K562 (cell line): ENCODE measurements at regions of chr9 and their contacts with region 1.

Region 1: GRCh38 chr9:114718801-114719221 is 36.8 kb upstream of the TEX48 start:
- DNase-seq: peak in 3 of 4 experiments; percentile 17 to 36 (median 22)
- ATAC-seq: peak; percentile 74
- H3K4me3 ChIP-seq: no peak overlapping the region
- H3K27ac ChIP-seq: no peak overlapping the region
- H3K4me1 ChIP-seq: peaks cover 0 to 4% of the 10 kb centered on the region in 2 experiments; a peak in 1 of 5 replicates
- H3K27me3 ChIP-seq: peaks cover 0 to 11% of the 10 kb centered on the region in 2 experiments; a peak in 2 of 5 replicates
- CTCF ChIP-seq: 0 out of 6 replicates have a peak, but pooled peaks of 1 of the 3 experiments have one; percentile 5
- EP300 ChIP-seq: no peak
- POLR2A ChIP-seq: no peak
- RAD21 ChIP-seq: no peak

Region 2: GRCh38 chr9:114671605-114672004 is 47.2 kb before region 1 on chr9:
- CTCF ChIA-PET with region 1: no interaction called
- POLR2A ChIA-PET with region 1: no interaction called
- in situ Hi-C with region 1: no loop called
- intact Hi-C with region 1: no loop called
- DNase-seq: no peak
- ATAC-seq: no peak
- H3K4me3 ChIP-seq: no peak overlapping the region
- H3K27ac ChIP-seq: no peak overlapping the region
- H3K4me1 ChIP-seq: no peaks in the 10 kb centered on the region
- H3K27me3 ChIP-seq: peaks cover 6 to 13% of the 10 kb centered on the region in 2 experiments; a peak in 4 of 5 replicates
- CTCF ChIP-seq: no peak
- EP300 ChIP-seq: no peak
- POLR2A ChIP-seq: no peak
- RAD21 ChIP-seq: no peak

Region 3: GRCh38 chr9:114681594-114682332 is 37.0 kb before region 1 on chr9 and contains the start of gene TEX48:
- CTCF ChIA-PET with region 1: no interaction called
- POLR2A ChIA-PET with region 1: no interaction called
- in situ Hi-C with region 1: no loop called
- intact Hi-C with region 1: loop called (anchors 5 kb)
- DNase-seq: peak; percentile 65 to 77 (median 75)
- ATAC-seq: peak; percentile 94
- H3K4me3 ChIP-seq: no peak within 1 kb of the TSS
- H3K27ac ChIP-seq: no peak within 1 kb of the TSS
- H3K4me1 ChIP-seq: peaks cover 0 to 3% of the 10 kb centered on the region in 2 experiments; a peak in 1 of 5 replicates
- H3K27me3 ChIP-seq: peaks cover 0 to under 1% of the 10 kb centered on the region in 2 experiments; a peak in 2 of 5 replicates
- CTCF ChIP-seq: peak; percentile 67 to 79 (median 78)
- EP300 ChIP-seq: no peak
- POLR2A ChIP-seq: no peak
- RAD21 ChIP-seq: peak; percentile 39 to 71
- polyA plus RNA-seq, gene TEX48: not detected

Region 4: GRCh38 chr9:114733816-114734215 is 15.0 kb after region 1 on chr9:
- CTCF ChIA-PET with region 1: no interaction called
- POLR2A ChIA-PET with region 1: no interaction called
- in situ Hi-C with region 1: no loop called
- intact Hi-C with region 1: no loop called
- DNase-seq: no peak
- ATAC-seq: peak; percentile 23; the same call in 1 of the 3 replicates
- H3K4me3 ChIP-seq: no peak overlapping the region
- H3K27ac ChIP-seq: no peak overlapping the region
- H3K4me1 ChIP-seq: no peaks in the 10 kb centered on the region
- H3K27me3 ChIP-seq: no peaks in the 10 kb centered on the region
- CTCF ChIP-seq: no peak
- EP300 ChIP-seq: no peak
- POLR2A ChIP-seq: no peak
- RAD21 ChIP-seq: no peak